Dorsolateral prefrontal cortex (tissue), 120 donors: ENCODE measurements at regions of chr10 and their contacts with region 1.

Region 1: GRCh38 chr10:5629303-5630111 is 36.9 kb downstream of the ASB13 start:
- DNase-seq: peak; percentile 37 to 82 (median 72)
- H3K4me3 ChIP-seq: no peak overlapping the region
- H3K27ac ChIP-seq: no peak overlapping the region
- H3K27me3 ChIP-seq: no peaks in the 10 kb centered on the region
- CTCF ChIP-seq: peak; percentile 56 to 91 (median 80)

Region 2: DNA sequence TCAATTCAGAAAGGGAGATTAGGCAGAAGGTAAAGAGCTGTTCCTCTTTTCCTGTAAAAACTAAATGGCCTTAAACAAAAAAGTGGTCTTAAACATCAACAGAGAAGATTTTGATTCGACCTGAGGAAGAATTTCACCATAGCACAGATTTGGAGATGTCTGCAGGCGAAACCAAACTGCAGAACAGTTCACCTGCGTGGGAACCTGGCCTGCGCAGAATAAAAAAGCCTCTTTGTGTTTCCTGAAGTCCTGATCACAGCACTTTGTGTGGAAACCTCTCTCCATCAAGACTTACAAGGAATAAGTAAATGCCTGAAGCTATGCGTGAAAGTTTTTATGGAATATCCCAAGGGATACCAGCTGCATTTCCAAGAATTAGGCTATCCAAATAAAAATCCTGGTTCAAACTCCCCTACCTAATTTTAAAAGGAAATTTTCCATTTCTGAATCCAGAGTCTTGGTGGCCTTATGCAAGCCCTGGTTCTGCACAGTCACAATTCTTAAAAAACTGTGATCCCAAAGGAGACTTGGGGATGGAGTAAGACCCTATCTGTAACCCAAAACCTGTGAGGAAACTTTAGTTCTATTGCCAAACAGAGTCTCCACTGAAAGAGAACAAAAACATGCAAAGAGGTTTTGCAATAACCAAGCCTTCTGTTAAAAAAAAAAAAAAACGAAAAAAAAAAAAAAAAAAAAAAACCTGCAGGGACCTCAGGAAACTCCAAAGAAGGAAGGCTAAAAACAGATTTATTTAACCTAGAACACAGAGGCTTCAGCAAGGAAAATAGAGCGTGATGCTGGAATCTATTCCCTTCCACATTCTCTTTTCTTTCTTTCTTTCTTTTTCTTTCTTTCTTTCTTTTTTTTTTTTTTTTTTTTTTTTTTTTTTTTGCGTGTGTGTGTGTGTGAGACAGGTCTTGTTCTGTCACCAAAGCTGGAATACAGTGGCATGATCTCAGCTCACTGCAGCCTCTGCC is 94.3 kb before region 1 on chr10:
- intact Hi-C with region 1: no loop called
- DNase-seq: peak in 1 of 10 donors; percentile 16
- H3K4me3 ChIP-seq: no peak overlapping the region
- H3K27ac ChIP-seq: peak overlapping the region in 13 of 59 donors; percentile 5 to 57 (median 27)
- H3K27me3 ChIP-seq: no peaks in the 10 kb centered on the region
- CTCF ChIP-seq: no peak

Region 3: DNA sequence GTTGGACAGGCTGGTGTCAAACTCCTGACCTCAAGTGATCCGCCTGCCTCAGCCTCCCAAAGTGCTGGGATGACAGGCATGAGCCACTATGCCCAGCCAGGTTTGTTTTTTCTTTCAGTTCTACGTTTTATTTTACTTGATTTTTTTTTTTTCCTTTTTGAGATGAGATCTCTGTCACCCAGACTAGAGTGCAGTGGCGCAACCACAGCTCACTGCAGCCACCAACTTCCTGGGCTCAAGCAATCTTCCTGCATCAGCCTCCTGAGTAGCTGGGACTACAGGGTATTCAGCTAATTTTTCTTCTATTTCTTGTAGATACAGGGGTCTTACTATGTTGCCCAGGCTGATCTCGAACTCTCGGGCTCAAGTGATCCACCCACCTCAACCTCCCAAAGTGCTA is 159.5 kb after region 1 on chr10:
- intact Hi-C with region 1: no loop called
- DNase-seq: no peak
- H3K4me3 ChIP-seq: no peak overlapping the region
- H3K27ac ChIP-seq: no peak overlapping the region
- H3K27me3 ChIP-seq: no peaks in the 10 kb centered on the region
- CTCF ChIP-seq: no peak

Region 4: GRCh38 chr10:5873515-5873995 is 244.0 kb after region 1 on chr10:
- intact Hi-C with region 1: loop called in 1 of 2 experiments (anchors 5 kb)
- DNase-seq: peak in 8 of 10 donors; percentile 50 to 78 (median 60)
- H3K4me3 ChIP-seq: peak overlapping the region in 4 of 59 donors; percentile 7 to 30 (median 7)
- H3K27ac ChIP-seq: peak overlapping the region in 45 of 59 donors; percentile 2 to 81 (median 52)
- H3K27me3 ChIP-seq: no peaks in the 10 kb centered on the region
- CTCF ChIP-seq: peak; percentile 59 to 93 (median 83)